ENCODE measurements at regions of chr5 and their contacts with region 1.

Region 1: GRCh38 chr5:135191084-135191826 is 157.2 kb upstream of the PITX1 start:
- DNase-seq: peak; percentile 62 to 80
- ATAC-seq: peak; percentile 97 to 99
- H3K4me3 ChIP-seq: peak overlapping the region; percentile 60
- H3K27ac ChIP-seq: peak overlapping the region; percentile 78 to 90
- H3K4me1 ChIP-seq: peaks cover 13% of the 10 kb centered on the region; the same call in 2 of the 3 replicates
- CTCF ChIP-seq: peak; percentile 94
- EP300 ChIP-seq: no peak
- POLR2A ChIP-seq: no peak
- RAD21 ChIP-seq: peak; percentile 97 to 99

Region 2: DNA sequence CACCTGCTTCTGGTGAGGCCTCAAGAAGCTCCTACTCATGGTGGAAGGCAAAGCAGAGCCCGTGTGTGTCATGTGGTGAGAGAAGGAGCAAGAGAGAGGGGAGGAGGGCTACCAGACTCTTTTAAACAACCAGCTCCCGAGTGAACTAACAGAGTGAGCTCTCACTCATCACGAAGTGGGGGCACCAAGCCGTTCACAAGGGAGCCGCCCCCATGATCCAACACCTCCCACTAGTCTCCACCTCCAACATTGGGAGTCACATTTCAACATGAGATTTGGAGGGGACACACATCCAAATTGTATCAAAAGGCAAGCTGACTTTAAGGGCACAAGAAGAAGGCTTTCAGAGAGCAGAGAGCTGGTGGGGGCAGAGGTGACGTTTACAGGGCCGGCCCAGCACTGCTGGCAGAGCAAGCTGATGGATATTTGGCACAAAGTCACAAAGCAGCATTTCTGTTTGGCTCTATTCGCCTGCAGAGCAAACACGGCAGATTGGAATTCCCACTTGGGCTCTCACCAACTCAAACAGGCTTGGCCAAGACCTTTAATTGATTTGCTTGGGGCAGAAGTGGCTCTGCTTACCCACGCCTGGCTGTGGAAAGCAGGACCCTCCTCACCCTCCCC is 177.2 kb before region 1 on chr5:
- CTCF ChIA-PET with region 1: interaction called, 29 read pairs
- POLR2A ChIA-PET with region 1: no interaction called
- DNase-seq: no peak
- ATAC-seq: no peak
- H3K4me3 ChIP-seq: no peak overlapping the region
- H3K27ac ChIP-seq: no peak overlapping the region
- H3K4me1 ChIP-seq: no peaks in the 10 kb centered on the region
- CTCF ChIP-seq: no peak
- EP300 ChIP-seq: no peak
- POLR2A ChIP-seq: no peak
- RAD21 ChIP-seq: no peak

Region 3: DNA sequence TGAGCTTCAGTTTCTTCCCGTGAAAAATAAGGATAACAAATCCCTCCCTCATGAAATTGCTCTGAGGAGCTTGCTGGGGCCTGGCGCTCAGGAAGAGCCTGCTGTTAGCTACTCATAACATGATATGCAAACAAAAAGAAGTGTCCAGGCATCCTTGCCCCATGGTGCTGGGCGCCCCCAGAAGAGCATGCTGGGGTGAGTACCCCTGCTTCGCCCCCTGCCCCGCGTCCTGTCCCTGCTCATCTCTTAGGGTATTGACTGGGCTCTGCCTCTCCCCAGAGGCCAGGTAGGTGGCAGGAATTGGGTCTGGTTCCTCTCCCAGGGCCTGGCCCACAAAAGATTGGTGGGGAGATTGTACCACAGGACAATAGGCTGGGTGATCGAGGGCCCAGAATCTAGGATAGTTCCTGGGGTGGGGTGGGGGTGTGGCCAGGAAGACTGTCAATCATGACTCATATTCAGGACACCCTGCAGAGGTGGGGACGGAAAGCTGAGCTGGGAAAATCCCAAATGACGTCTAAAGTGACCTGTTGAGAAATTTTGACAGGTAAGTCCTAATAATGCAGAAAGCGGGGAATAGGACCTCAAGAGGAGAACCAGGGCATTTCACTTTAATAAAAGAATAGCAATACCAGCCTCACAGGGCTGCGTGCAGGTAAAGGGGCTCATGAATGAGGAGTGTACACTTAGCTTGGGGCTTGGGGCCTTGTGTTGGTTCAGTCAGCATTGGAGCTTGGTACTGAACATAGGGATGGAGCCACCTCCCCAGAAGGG is 166.1 kb before region 1 on chr5:
- CTCF ChIA-PET with region 1: interaction called, 13 read pairs
- POLR2A ChIA-PET with region 1: no interaction called
- DNase-seq: peak; percentile 35 to 64
- ATAC-seq: peak; percentile 27 to 64; a peak in 4 of 6 replicates
- H3K4me3 ChIP-seq: no peak overlapping the region
- H3K27ac ChIP-seq: no peak overlapping the region
- H3K4me1 ChIP-seq: peaks cover 18% of the 10 kb centered on the region; the same call in 2 of the 3 replicates
- CTCF ChIP-seq: no peak
- EP300 ChIP-seq: no peak
- POLR2A ChIP-seq: no peak
- RAD21 ChIP-seq: no peak

Region 4: GRCh38 chr5:135139381-135140137 is 51.7 kb before region 1 on chr5:
- CTCF ChIA-PET with region 1: interaction called, 19 read pairs
- POLR2A ChIA-PET with region 1: no interaction called
- DNase-seq: peak; percentile 81 to 92
- ATAC-seq: peak; percentile 82 to 83
- H3K4me3 ChIP-seq: no peak overlapping the region
- H3K27ac ChIP-seq: peak overlapping the region; percentile 68 to 84
- H3K4me1 ChIP-seq: peaks cover 77% of the 10 kb centered on the region
- CTCF ChIP-seq: no peak
- EP300 ChIP-seq: no peak
- POLR2A ChIP-seq: no peak
- RAD21 ChIP-seq: no peak

Region 5: GRCh38 chr5:135179308-135179980 is 11.8 kb before region 1 on chr5:
- CTCF ChIA-PET with region 1: interaction called, 45 read pairs
- POLR2A ChIA-PET with region 1: interaction called, 5 read pairs
- DNase-seq: no peak
- ATAC-seq: peak in 1 of 2 experiments; percentile 76; a peak in 3 of 6 replicates
- H3K4me3 ChIP-seq: no peak overlapping the region
- H3K27ac ChIP-seq: no peak overlapping the region
- H3K4me1 ChIP-seq: no peaks in the 10 kb centered on the region
- CTCF ChIP-seq: no peak
- EP300 ChIP-seq: no peak
- POLR2A ChIP-seq: no peak
- RAD21 ChIP-seq: no peak

Region 6: GRCh38 chr5:135246923-135247795 is 55.9 kb after region 1 on chr5:
- CTCF ChIA-PET with region 1: interaction called, 16 read pairs
- POLR2A ChIA-PET with region 1: no interaction called
- DNase-seq: peak; percentile 85 to 86
- ATAC-seq: peak; percentile 80 to 86
- H3K4me3 ChIP-seq: 0 out of 3 replicates have a peak overlapping the region, but pooled peaks have one; percentile 17
- H3K27ac ChIP-seq: peak overlapping the region; percentile 93 to 98
- H3K4me1 ChIP-seq: peaks cover 63% of the 10 kb centered on the region
- CTCF ChIP-seq: no peak
- EP300 ChIP-seq: peak in 1 of 2 experiments; percentile 58; a peak in 2 of 5 replicates
- POLR2A ChIP-seq: no peak
- RAD21 ChIP-seq: no peak; a peak in 1 of 5 replicates

Region 7: DNA sequence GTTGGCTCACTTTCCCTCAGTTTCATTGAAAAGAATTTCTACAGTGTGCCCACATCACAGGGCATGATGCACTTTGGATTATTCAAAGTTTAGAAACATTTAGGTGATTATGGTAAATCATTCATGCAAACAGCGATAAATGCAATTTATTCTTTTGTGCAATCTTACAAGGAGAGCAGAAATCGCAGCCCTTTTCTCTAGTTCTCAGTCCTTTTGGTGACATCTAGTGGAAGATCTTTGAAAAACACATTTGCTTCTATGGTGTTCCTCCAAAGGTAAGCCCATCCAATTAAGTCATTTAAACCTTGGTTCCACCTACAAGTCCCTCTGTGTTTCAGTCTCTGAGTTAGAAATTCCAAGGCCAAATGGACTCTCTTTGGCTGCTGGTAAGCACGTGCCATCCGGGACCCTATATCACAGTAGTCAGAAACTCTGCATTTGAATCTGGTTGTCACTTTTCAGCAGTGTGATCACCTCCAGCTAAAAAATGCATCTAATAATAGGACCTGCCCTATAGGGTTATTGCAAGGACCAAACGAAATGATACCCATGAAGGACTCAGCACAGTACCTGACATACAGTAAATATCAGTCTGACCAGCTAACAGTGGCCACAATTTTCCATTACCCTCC is 141.4 kb after region 1 on chr5:
- CTCF ChIA-PET with region 1: interaction called, 99 read pairs
- POLR2A ChIA-PET with region 1: no interaction called
- DNase-seq: peak; percentile 68 to 90
- ATAC-seq: peak; percentile 49 to 61; a peak in 4 of 6 replicates
- H3K4me3 ChIP-seq: no peak overlapping the region
- H3K27ac ChIP-seq: 0 out of 6 replicates have a peak overlapping the region, but pooled peaks of 1 of the 2 experiments have one; percentile 20
- H3K4me1 ChIP-seq: no peaks in the 10 kb centered on the region
- CTCF ChIP-seq: peak; percentile 81
- EP300 ChIP-seq: no peak
- POLR2A ChIP-seq: no peak
- RAD21 ChIP-seq: peak; percentile 81 to 91

Measured in A549 (cell line).